WTC11 (cell line): ENCODE measurements at regions of chr16 and their contacts with region 1.

Region 1: GRCh38 chr16:50024684-50025536 is at the start of gene CNEP1R1:
- DNase-seq: peak; percentile 95
- ATAC-seq: peak; percentile 95
- H3K4me3 Mint-ChIP-seq: peak within 1 kb of the TSS; percentile 92
- H3K27ac Mint-ChIP-seq: peak within 1 kb of the TSS; percentile 46
- H3K4me1 Mint-ChIP-seq: peaks cover 16% of the 10 kb centered on the region
- H3K27me3 Mint-ChIP-seq: no peaks in the 10 kb centered on the region
- CTCF ChIP-seq: peak; percentile 92
- total RNA-seq, gene CNEP1R1: 13.2 to 13.8 TPM (median 13.7 TPM) in 3 replicates

Region 2: GRCh38 chr16:49958448-49958847 is 66.5 kb before region 1 on chr16:
- CTCF ChIA-PET with region 1: interaction called, 49 read pairs
- POLR2A ChIA-PET with region 1: interaction called, 6 read pairs
- DNase-seq: no peak
- ATAC-seq: no peak
- H3K4me3 Mint-ChIP-seq: no peak overlapping the region
- H3K27ac Mint-ChIP-seq: no peak overlapping the region
- H3K4me1 Mint-ChIP-seq: no peaks in the 10 kb centered on the region; the same call in 1 of the 2 replicates
- H3K27me3 Mint-ChIP-seq: no peaks in the 10 kb centered on the region
- CTCF ChIP-seq: no peak

Region 3: GRCh38 chr16:50011707-50012106 is 13.2 kb before region 1 on chr16:
- CTCF ChIA-PET with region 1: interaction called, 17 read pairs
- POLR2A ChIA-PET with region 1: no interaction called
- DNase-seq: no peak
- ATAC-seq: no peak
- H3K4me3 Mint-ChIP-seq: no peak overlapping the region
- H3K27ac Mint-ChIP-seq: no peak overlapping the region
- H3K4me1 Mint-ChIP-seq: peaks cover 18% of the 10 kb centered on the region
- H3K27me3 Mint-ChIP-seq: peaks cover 5% of the 10 kb centered on the region; the same call in 1 of the 2 replicates
- CTCF ChIP-seq: no peak

Region 4: GRCh38 chr16:50065624-50066481 is 40.9 kb after region 1 on chr16 and contains the start of gene HEATR3:
- CTCF ChIA-PET with region 1: interaction called, 45 read pairs
- POLR2A ChIA-PET with region 1: interaction called, 4 read pairs
- DNase-seq: peak; percentile 94
- ATAC-seq: peak; percentile 91
- H3K4me3 Mint-ChIP-seq: peak within 1 kb of the TSS; percentile 78
- H3K27ac Mint-ChIP-seq: peak within 1 kb of the TSS; percentile 58
- H3K4me1 Mint-ChIP-seq: peaks cover 17% of the 10 kb centered on the region
- H3K27me3 Mint-ChIP-seq: no peaks in the 10 kb centered on the region; the same call in 1 of the 2 replicates
- CTCF ChIP-seq: no peak
- total RNA-seq, gene HEATR3: 27.8 to 28.1 TPM (median 28.0 TPM) in 3 replicates

Region 5: DNA sequence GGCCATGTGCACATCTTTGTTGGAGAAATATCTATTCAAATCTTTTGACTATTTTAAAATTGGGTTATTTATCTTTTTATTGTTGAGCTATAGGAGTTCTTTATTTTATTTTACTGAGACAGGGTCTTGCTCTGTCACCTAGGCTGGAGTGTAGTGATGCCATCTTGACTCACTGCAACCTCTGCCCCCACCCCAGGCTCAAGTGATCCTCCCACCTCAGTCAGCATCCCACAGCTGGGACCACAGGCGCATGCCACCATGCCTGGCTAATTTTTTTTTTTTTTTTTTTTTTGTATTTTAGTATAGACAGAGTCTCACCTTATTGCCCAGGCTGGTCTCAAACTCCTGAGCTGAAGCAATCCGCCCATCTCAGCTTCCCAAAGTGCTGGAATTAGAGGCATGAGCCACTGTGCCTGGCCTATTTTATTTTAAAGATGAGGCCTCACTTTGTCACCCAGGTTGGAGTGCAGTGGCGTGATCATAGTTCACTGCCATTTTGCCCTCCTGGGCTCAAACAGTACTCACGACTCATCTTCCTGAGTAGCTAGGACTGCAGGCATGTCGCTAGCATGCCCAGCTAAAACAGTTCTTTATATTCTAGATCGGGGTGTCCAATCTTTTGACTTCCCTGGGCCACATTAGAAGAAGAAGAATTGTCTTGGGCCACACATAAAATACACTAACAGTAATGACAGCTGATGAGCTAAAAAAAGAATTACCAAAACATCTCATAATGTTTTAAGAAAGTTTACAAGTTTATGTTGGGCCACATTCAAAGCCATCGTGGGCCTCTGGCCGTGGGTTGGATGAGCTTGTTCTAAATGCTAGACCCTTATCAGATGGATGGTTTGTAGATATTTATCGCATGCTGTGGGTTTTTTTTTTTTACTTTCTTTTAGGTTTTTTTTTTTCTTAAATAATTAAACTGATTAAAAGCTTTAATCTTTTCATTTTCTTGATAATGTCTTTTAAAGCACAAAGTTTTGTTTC is 141.9 kb after region 1 on chr16:
- CTCF ChIA-PET with region 1: interaction called, 10 read pairs
- POLR2A ChIA-PET with region 1: no interaction called
- DNase-seq: no peak
- ATAC-seq: no peak
- H3K4me3 Mint-ChIP-seq: no peak overlapping the region
- H3K27ac Mint-ChIP-seq: peak overlapping the region; percentile 36
- H3K4me1 Mint-ChIP-seq: peaks cover 20% of the 10 kb centered on the region
- H3K27me3 Mint-ChIP-seq: no peaks in the 10 kb centered on the region
- CTCF ChIP-seq: no peak